Activated CD4-positive, alpha-beta T cell treated with anti-CD3 and anti-CD28 coated beads, Interleukin-2, amount 10 ng/mL, durations not matched to agents 24 days and 14 days (primary cell): ENCODE measurements at regions of chr11 and their contacts with region 1.

Region 1: GRCh38 chr11:112113539-112114457 is 27.1 kb downstream of the SDHD start:
- DNase-seq: no peak
- H3K4me3 Mint-ChIP-seq: no peak overlapping the region
- H3K27ac Mint-ChIP-seq: no peak overlapping the region
- H3K4me1 Mint-ChIP-seq: peaks cover 3% of the 10 kb centered on the region
- H3K27me3 Mint-ChIP-seq: no peaks in the 10 kb centered on the region

Region 2: GRCh38 chr11:112174789-112175598 is 61.2 kb after region 1 on chr11 and contains the start of gene BCO2:
- intact Hi-C with region 1: loop called (anchors 2 kb)
- DNase-seq: peak; percentile 82
- H3K4me3 Mint-ChIP-seq: peak within 1 kb of the TSS; percentile 65
- H3K27ac Mint-ChIP-seq: peak within 1 kb of the TSS; percentile 38
- H3K4me1 Mint-ChIP-seq: peaks cover 7% of the 10 kb centered on the region
- H3K27me3 Mint-ChIP-seq: peaks cover 34% of the 10 kb centered on the region
- total RNA-seq, gene BCO2: 0.83 and 1.1 TPM in 2 replicates